Posterior vena cava (tissue), 2 donors: ENCODE measurements at regions of chr3 and their contacts with region 1.

Region 1: GRCh38 chr3:184945886-184946625 is 134.1 kb downstream of the VPS8 start:
- DNase-seq: no peak

Region 2: DNA sequence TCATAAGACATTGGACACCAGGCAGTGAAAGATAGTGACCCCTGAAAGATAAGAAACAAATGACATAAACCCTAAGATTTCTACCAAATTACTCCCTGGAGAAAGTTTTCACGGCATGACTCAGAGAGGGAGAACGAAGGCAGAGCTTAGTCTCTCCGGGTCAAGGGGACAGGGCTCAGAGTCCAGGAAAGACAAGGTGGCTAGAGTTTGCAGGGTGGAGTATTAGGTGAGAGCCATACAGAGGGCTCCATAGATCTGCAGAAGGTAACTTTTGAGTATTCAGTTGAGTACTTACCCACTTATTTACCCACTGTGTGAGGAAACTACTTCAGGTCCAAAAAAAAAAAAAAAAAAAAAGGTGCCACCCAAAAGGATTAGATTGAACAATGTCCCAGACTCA is 63.6 kb after region 1 on chr3:
- intact Hi-C with region 1: loop called in 1 of 2 experiments (anchors 2 kb)
- DNase-seq: no peak